B cell (primary cell): ENCODE measurements at regions of chr1 and their contacts with region 1.

Region 1: DNA sequence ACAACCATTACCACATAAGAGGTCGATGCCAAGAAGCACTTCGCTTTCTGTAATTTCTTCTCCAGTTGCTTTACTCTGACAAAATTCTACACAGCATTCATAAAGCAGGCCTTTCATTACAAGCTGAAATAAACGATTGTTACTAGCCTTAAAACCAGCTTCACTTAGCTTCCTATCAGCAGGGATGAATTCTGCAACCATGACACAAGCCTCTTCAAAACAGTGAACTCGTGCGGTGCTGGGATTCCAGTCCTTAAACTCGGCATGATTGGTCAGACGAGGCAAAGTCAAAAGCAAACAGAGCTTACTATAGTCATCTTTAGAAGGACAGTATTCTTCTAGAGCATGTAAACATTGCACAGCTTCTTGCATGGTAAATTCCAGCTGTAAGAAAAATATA is 30.6 kb downstream of the WDR47 start:
- DNase-seq: no peak
- ATAC-seq: no peak
- H3K4me3 ChIP-seq: no peak overlapping the region
- H3K4me3 Mint-ChIP-seq: no peak overlapping the region
- H3K27ac ChIP-seq: no peak overlapping the region
- H3K27ac Mint-ChIP-seq: no peak overlapping the region
- H3K4me1 ChIP-seq: no peaks in the 10 kb centered on the region
- H3K4me1 Mint-ChIP-seq: no peaks in the 10 kb centered on the region
- H3K27me3 ChIP-seq: no peaks in the 10 kb centered on the region
- H3K27me3 Mint-ChIP-seq: no peaks in the 10 kb centered on the region
- CTCF ChIP-seq: no peak

Region 2: GRCh38 chr1:108972951-108973350 is 38.4 kb before region 1 on chr1:
- CTCF ChIA-PET with region 1: no interaction called
- POLR2A ChIA-PET with region 1: no interaction called
- intact Hi-C with region 1: loop called (anchors 5 kb)
- DNase-seq: no peak
- ATAC-seq: no peak
- H3K4me3 ChIP-seq: no peak overlapping the region
- H3K4me3 Mint-ChIP-seq: no peak overlapping the region
- H3K27ac ChIP-seq: no peak overlapping the region
- H3K27ac Mint-ChIP-seq: no peak overlapping the region
- H3K4me1 ChIP-seq: no peaks in the 10 kb centered on the region
- H3K4me1 Mint-ChIP-seq: no peaks in the 10 kb centered on the region
- H3K27me3 ChIP-seq: no peaks in the 10 kb centered on the region
- H3K27me3 Mint-ChIP-seq: no peaks in the 10 kb centered on the region
- CTCF ChIP-seq: no peak

Region 3: DNA sequence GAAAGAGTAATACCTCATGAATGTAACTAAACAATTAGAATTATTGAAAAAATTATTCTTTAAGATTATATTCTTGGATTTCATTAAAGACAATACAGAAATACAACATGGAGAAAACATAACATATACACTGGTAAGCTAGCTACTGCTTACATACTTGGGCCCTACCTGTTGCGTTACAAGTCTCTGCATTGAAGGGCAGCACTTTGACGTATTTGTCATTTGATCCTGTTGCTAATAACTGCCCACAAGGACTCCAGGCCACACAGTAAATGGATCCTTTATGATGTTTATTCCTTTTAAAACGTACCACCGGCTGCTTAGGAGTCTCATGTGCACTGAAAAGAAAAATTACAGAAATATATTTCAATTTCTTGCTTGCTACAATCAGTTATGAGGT is 28.2 kb before region 1 on chr1:
- CTCF ChIA-PET with region 1: no interaction called
- POLR2A ChIA-PET with region 1: no interaction called
- intact Hi-C with region 1: no loop called
- DNase-seq: no peak
- ATAC-seq: no peak
- H3K4me3 ChIP-seq: no peak overlapping the region
- H3K4me3 Mint-ChIP-seq: no peak overlapping the region
- H3K27ac ChIP-seq: no peak overlapping the region
- H3K27ac Mint-ChIP-seq: no peak overlapping the region
- H3K4me1 ChIP-seq: no peaks in the 10 kb centered on the region
- H3K4me1 Mint-ChIP-seq: no peaks in the 10 kb centered on the region
- H3K27me3 ChIP-seq: no peaks in the 10 kb centered on the region
- H3K27me3 Mint-ChIP-seq: no peaks in the 10 kb centered on the region
- CTCF ChIP-seq: no peak